GM23248 (cell line): ENCODE measurements at regions of chr17 and their contacts with region 1.

Region 1: DNA sequence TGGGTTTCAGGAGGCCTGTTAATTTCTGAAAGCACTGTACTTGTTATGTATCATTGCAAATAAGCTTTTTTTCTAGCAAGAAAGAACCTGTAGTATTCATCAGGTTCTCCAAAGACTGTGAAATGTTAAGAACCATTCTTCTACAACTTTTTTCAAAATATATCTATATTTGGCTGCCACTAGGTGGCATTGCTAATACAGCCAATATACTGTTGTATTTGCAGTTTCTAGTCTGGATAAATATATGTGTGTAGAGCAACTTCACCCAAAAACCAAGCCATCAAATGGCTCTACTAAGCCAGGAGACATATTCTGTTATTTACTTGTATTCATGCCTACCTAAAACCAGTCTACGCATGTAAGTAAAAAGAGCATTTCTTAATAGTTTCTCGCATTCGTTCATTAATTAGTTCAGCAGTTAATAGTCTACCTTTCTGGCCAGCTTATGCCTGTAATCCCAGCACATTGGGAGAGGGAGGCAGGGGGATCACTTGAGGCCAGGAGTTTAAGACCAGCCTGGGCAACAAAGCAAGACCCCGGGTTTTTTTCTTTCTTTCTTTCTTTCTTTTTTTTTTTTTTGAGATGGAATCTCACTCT is 39.5 kb downstream of the VMP1 start:
- DNase-seq: peak; percentile 78
- H3K4me3 ChIP-seq: no peak overlapping the region
- H3K27ac ChIP-seq: no peak overlapping the region
- H3K4me1 ChIP-seq: peaks cover 2% of the 10 kb centered on the region; the same call in 1 of the 2 replicates
- H3K27me3 ChIP-seq: no peaks in the 10 kb centered on the region

Region 2: GRCh38 chr17:59804901-59805465 is 58.0 kb after region 1 on chr17:
- in situ Hi-C with region 1: no loop called
- DNase-seq: peak; percentile 53
- H3K4me3 ChIP-seq: peak overlapping the region; percentile 65
- H3K27ac ChIP-seq: peak overlapping the region; percentile 91
- H3K4me1 ChIP-seq: peaks cover 62% of the 10 kb centered on the region
- H3K27me3 ChIP-seq: no peaks in the 10 kb centered on the region

Region 3: DNA sequence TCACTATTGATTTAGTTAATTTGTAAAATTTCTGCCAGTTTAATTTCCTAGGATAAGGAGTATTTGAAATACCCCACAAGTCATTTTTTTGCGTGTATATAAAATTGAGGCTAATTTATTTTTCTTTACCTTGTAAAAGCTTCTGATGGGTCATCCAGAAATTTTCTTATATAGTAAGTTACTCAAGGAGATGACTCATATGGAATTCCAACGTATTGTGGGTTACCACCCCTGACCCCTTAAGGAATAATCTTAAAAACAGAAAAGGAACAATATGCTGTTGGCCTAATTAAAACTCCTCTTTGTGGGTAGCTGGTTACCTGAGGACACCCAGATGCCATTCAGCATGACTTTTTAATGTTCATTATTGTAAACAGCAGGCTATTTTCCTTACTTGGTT is 318.2 kb after region 1 on chr17:
- in situ Hi-C with region 1: loop called (anchors 25 kb)
- DNase-seq: peak; percentile 34
- H3K4me3 ChIP-seq: no peak overlapping the region
- H3K27ac ChIP-seq: no peak overlapping the region
- H3K4me1 ChIP-seq: peaks cover 8% of the 10 kb centered on the region
- H3K27me3 ChIP-seq: no peaks in the 10 kb centered on the region

Region 4: GRCh38 chr17:61647047-61647446 is 1900.1 kb after region 1 on chr17:
- in situ Hi-C with region 1: no loop called
- DNase-seq: peak; percentile 59
- H3K4me3 ChIP-seq: no peak overlapping the region
- H3K27ac ChIP-seq: no peak overlapping the region
- H3K4me1 ChIP-seq: peaks cover 18% of the 10 kb centered on the region
- H3K27me3 ChIP-seq: no peaks in the 10 kb centered on the region